Heart right ventricle (tissue), 16 donors: ENCODE measurements at regions of chr9 and their contacts with region 1.

Region 1: GRCh38 chr9:20980832-20981455 is 50.5 kb downstream of the HACD4 start:
- DNase-seq: no peak
- ATAC-seq: peak in 4 of 8 donors; percentile 46 to 55 (median 49)
- H3K4me3 ChIP-seq: no peak overlapping the region
- H3K27ac ChIP-seq: peak overlapping the region in 2 of 10 donors; percentile 28 to 78
- H3K4me1 ChIP-seq: peaks cover 0 to 30% (median 4%) of the 10 kb centered on the region in 9 donors
- H3K27me3 ChIP-seq: no peaks in the 10 kb centered on the region
- CTCF ChIP-seq: no peak

Region 2: GRCh38 chr9:20135119-20135697 is 845.7 kb before region 1 on chr9:
- intact Hi-C with region 1: no loop called
- DNase-seq: no peak
- ATAC-seq: no peak
- H3K4me3 ChIP-seq: no peak overlapping the region
- H3K27ac ChIP-seq: no peak overlapping the region
- H3K4me1 ChIP-seq: no peaks in the 10 kb centered on the region
- H3K27me3 ChIP-seq: no peaks in the 10 kb centered on the region
- CTCF ChIP-seq: no peak

Region 3: GRCh38 chr9:21047281-21047691 is 66.3 kb after region 1 on chr9:
- intact Hi-C with region 1: loop called in 1 of 10 experiments (anchors 10 kb)
- DNase-seq: no peak
- ATAC-seq: no peak
- H3K4me3 ChIP-seq: no peak overlapping the region
- H3K27ac ChIP-seq: no peak overlapping the region
- H3K4me1 ChIP-seq: no peaks in the 10 kb centered on the region
- H3K27me3 ChIP-seq: no peaks in the 10 kb centered on the region
- CTCF ChIP-seq: no peak

Region 4: DNA sequence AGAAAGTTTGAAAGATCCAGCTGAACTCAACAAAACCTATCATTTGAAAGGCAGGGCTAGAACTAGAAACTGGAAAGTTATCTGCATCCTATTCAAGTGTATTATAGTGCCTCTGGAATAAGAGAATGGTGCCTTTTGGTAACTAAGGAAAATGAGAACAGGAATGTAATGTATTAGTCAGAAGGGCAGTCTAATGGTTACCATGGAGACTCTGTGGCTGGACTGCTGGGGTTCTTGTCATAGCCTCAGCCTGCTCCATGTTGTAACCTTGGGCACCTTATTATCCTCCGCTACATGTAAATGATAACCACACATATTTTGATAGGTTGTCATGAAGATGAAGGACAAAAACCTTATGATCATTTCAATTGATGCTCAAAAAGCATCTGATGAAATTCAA is 121.4 kb after region 1 on chr9:
- intact Hi-C with region 1: loop called in 1 of 10 experiments (anchors 10 kb)
- DNase-seq: no peak
- ATAC-seq: no peak
- H3K4me3 ChIP-seq: no peak overlapping the region
- H3K27ac ChIP-seq: no peak overlapping the region
- H3K4me1 ChIP-seq: peaks cover 0 to 22% (median under 1%) of the 10 kb centered on the region in 9 donors
- H3K27me3 ChIP-seq: no peaks in the 10 kb centered on the region
- CTCF ChIP-seq: no peak